Heart left ventricle (tissue), 16 donors: ENCODE measurements at regions of chr6 and their contacts with region 1.

Region 1: GRCh38 chr6:166627033-166627874 is at the start of gene RPS6KA2:
- DNase-seq: peak; percentile 100
- ATAC-seq: peak; percentile 93 to 96 (median 96)
- H3K4me3 ChIP-seq: peak within 1 kb of the TSS; percentile 58 to 96 (median 90)
- H3K27ac ChIP-seq: peak within 1 kb of the TSS; percentile 85 to 99 (median 92)
- H3K4me1 ChIP-seq: peaks cover 5 to 68% (median 35%) of the 10 kb centered on the region in 12 donors
- H3K27me3 ChIP-seq: no peaks in the 10 kb centered on the region
- CTCF ChIP-seq: peak in 9 of 12 donors; percentile 4 to 49 (median 17)
- POLR2A ChIP-seq: peak; percentile 92 to 93
- total RNA-seq, gene RPS6KA2: 66.5 to 171 (median 91.6) TPM

Region 2: GRCh38 chr6:166488076-166488685 is 139.1 kb before region 1 on chr6:
- intact Hi-C with region 1: loop called in 2 of 10 experiments (anchors 5 kb)
- DNase-seq: peak; percentile 70 to 81 (median 73)
- ATAC-seq: peak; percentile 43 to 88 (median 69)
- H3K4me3 ChIP-seq: peak overlapping the region in 2 of 12 donors; percentile 12 to 18
- H3K27ac ChIP-seq: peak overlapping the region in 11 of 12 donors; percentile 23 to 90 (median 52)
- H3K4me1 ChIP-seq: peaks cover 0 to 34% (median 20%) of the 10 kb centered on the region in 12 donors
- H3K27me3 ChIP-seq: no peaks in the 10 kb centered on the region
- CTCF ChIP-seq: no peak
- POLR2A ChIP-seq: no peak

Region 3: DNA sequence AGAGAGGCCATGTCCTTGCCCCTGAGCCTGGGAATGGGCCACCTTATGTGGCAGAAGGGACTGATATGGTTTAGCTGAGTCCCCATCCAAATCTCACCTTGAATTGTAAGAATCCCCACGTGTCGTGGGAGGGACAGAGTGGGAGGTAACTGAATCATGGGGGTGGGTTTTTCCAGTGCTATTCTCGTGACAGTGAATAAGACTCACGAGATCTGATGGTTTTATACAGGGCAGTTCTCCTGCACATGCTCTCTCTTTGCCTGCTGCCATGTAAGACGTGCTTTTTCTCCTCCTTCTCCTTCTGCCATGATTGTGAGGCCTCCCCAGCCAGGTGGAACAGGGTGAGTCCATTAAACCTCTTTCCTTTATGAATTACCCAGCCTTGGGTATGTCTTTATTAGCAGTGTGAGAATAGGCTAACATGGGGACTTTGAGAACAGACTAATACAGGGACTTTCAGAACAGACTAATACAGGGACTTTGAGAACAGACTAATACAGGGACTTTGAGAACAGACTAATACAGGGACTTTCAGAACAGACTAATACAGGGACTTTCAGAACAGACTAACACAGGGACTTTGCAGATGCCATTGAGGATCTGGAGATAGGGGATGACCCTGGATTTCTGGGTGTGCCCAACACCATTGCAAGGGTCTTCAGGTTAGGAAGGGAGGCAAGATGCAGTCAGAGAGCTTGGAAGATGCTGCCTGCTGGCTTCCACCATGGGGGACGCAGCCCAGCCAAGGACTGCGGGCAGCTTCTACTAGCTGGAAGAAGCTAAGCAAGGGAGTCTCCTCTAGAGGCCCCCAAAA is 127.7 kb before region 1 on chr6:
- intact Hi-C with region 1: loop called in 2 of 10 experiments (anchors 5 kb)
- DNase-seq: peak in 1 of 5 donors; percentile 0
- ATAC-seq: no peak
- H3K4me3 ChIP-seq: no peak overlapping the region
- H3K27ac ChIP-seq: no peak overlapping the region
- H3K4me1 ChIP-seq: peaks cover 0 to 7% (median 0%) of the 10 kb centered on the region in 12 donors
- H3K27me3 ChIP-seq: no peaks in the 10 kb centered on the region
- CTCF ChIP-seq: no peak
- POLR2A ChIP-seq: no peak

Region 4: GRCh38 chr6:166556871-166557322 is 70.4 kb before region 1 on chr6:
- intact Hi-C with region 1: loop called in 9 of 10 experiments (anchors 2 to 10 kb)
- DNase-seq: peak; percentile 90 to 96 (median 90)
- ATAC-seq: peak; percentile 96 to 97 (median 96)
- H3K4me3 ChIP-seq: peak overlapping the region in 6 of 12 donors; percentile 0 to 27 (median 16)
- H3K27ac ChIP-seq: peak overlapping the region; percentile 33 to 83 (median 76)
- H3K4me1 ChIP-seq: peaks cover 0 to 63% (median 42%) of the 10 kb centered on the region in 12 donors
- H3K27me3 ChIP-seq: no peaks in the 10 kb centered on the region
- CTCF ChIP-seq: peak in 3 of 12 donors; percentile 15 to 23 (median 22)
- POLR2A ChIP-seq: peak in 1 of 2 donors; percentile 46

Region 5: DNA sequence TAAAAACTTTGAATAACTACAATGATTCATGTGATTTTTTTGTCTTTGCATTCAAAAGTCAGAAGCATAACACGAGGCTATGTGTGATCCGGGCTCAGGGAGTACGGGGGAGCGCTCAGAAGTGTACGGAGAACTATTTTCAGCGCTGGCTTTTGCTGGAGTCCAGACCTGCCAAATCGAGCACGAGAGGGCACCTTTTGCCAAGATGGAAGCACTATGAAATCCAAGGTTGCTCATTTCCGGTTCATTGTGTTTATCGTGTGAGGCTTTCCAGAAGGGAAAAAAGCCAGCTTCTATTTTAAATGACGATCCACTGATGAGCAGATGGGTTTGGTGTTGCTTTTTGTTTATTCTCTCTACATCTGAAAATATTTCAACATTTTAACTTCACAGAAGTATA is 52.0 kb before region 1 on chr6:
- intact Hi-C with region 1: loop called in 2 of 10 experiments (anchors 5 kb)
- DNase-seq: peak in 4 of 5 donors; percentile 62 to 74 (median 68)
- ATAC-seq: peak; percentile 87 to 95 (median 94)
- H3K4me3 ChIP-seq: no peak overlapping the region
- H3K27ac ChIP-seq: peak overlapping the region; percentile 6 to 73 (median 46)
- H3K4me1 ChIP-seq: peaks cover 0 to 30% (median 17%) of the 10 kb centered on the region in 12 donors
- H3K27me3 ChIP-seq: no peaks in the 10 kb centered on the region
- CTCF ChIP-seq: peak in 1 of 12 donors; percentile 26
- POLR2A ChIP-seq: no peak

Region 6: GRCh38 chr6:166586424-166587156 is 40.7 kb before region 1 on chr6 and contains the start of gene RAMACL:
- intact Hi-C with region 1: loop called in 1 of 10 experiments (anchors 5 kb)
- DNase-seq: no peak
- ATAC-seq: peak in 2 of 4 donors; percentile 48 to 49
- H3K4me3 ChIP-seq: no peak within 1 kb of the TSS
- H3K27ac ChIP-seq: no peak within 1 kb of the TSS
- H3K4me1 ChIP-seq: peaks cover 0 to 39% (median 23%) of the 10 kb centered on the region in 12 donors
- H3K27me3 ChIP-seq: no peaks in the 10 kb centered on the region
- CTCF ChIP-seq: no peak
- POLR2A ChIP-seq: no peak
- total RNA-seq, gene RAMACL: 0.27 to 2.0 (median 0.69) TPM

Region 7: GRCh38 chr6:166691199-166691598 is 63.9 kb after region 1 on chr6:
- intact Hi-C with region 1: loop called in 3 of 10 experiments (anchors 2 to 5 kb)
- DNase-seq: peak in 4 of 5 donors; percentile 66 to 82 (median 74)
- ATAC-seq: peak; percentile 95 to 97 (median 96)
- H3K4me3 ChIP-seq: no peak overlapping the region
- H3K27ac ChIP-seq: peak overlapping the region in 10 of 12 donors; percentile 27 to 87 (median 69)
- H3K4me1 ChIP-seq: peaks cover 0 to 22% (median 11%) of the 10 kb centered on the region in 12 donors
- H3K27me3 ChIP-seq: no peaks in the 10 kb centered on the region
- CTCF ChIP-seq: no peak
- POLR2A ChIP-seq: no peak